Activated T-helper 1 cell treated with anti-CD3 and anti-CD28 coated beads, Interleukin-12 subunit alpha, Interleukin-12 subunit beta, Interleukin-2, Interleukin-4 antibody, amounts not matched to agents 30 ng/mL and 10 ng/mL and 1 ng/mL, durations not matched to agents 14 hours and 24 hours and 36 hours (primary cell): ENCODE measurements at regions of chr6 and their contacts with region 1.

Region 1: GRCh38 chr6:139375232-139376016 is 976 bp upstream of the CITED2 start:
- DNase-seq: peak; percentile 81
- H3K4me3 Mint-ChIP-seq: peak overlapping the region; percentile 87
- H3K27ac Mint-ChIP-seq: peak overlapping the region; percentile 98
- H3K4me1 Mint-ChIP-seq: peaks cover 31% of the 10 kb centered on the region
- H3K27me3 Mint-ChIP-seq: no peaks in the 10 kb centered on the region

Region 2: GRCh38 chr6:139028658-139029469 is 346.6 kb before region 1 on chr6 and contains the start of gene ABRACL:
- intact Hi-C with region 1: loop called (anchors 2 kb)
- DNase-seq: peak; percentile 73
- H3K4me3 Mint-ChIP-seq: peak within 1 kb of the TSS; percentile 93
- H3K27ac Mint-ChIP-seq: peak within 1 kb of the TSS; percentile 82
- H3K4me1 Mint-ChIP-seq: peaks cover 29% of the 10 kb centered on the region
- H3K27me3 Mint-ChIP-seq: no peaks in the 10 kb centered on the region
- total RNA-seq, gene ABRACL: 129 and 135 TPM in 2 replicates

Region 3: GRCh38 chr6:139308286-139308916 is 67.0 kb before region 1 on chr6:
- intact Hi-C with region 1: no loop called
- DNase-seq: no peak
- H3K4me3 Mint-ChIP-seq: no peak overlapping the region
- H3K27ac Mint-ChIP-seq: peak overlapping the region; percentile 78
- H3K4me1 Mint-ChIP-seq: peaks cover 32% of the 10 kb centered on the region
- H3K27me3 Mint-ChIP-seq: peaks cover 6% of the 10 kb centered on the region

Region 4: DNA sequence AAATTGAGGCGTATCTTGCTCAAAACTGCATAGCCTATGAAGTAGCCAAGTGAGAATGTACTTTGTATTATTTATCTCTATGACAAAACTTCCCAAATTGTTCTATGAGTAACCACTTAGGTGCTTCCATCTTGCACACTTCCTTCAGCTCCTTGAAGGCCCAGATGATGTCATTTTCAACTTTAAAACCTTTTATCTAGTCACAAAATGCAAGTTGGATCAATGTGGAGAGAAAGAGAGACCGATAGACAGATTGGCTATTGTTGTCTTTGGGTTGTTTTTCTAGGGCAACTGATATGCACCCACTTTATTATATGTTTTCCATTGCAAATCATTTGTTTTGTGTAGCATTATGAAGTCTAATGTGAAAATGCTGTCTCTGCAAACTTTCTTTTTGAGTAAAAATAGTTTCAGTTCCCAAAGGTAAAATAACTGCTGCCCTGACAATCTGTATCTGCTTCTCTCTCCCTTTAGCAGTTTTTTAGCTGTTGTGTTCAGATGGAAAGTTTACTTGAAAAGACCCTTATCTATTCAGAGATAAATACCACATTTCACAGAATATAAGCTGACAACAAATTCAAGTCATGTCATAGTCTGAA is 72.7 kb after region 1 on chr6:
- intact Hi-C with region 1: loop called (anchors 5 kb)
- DNase-seq: no peak
- H3K4me3 Mint-ChIP-seq: no peak overlapping the region
- H3K27ac Mint-ChIP-seq: no peak overlapping the region
- H3K4me1 Mint-ChIP-seq: peaks cover 14% of the 10 kb centered on the region
- H3K27me3 Mint-ChIP-seq: no peaks in the 10 kb centered on the region

Region 5: DNA sequence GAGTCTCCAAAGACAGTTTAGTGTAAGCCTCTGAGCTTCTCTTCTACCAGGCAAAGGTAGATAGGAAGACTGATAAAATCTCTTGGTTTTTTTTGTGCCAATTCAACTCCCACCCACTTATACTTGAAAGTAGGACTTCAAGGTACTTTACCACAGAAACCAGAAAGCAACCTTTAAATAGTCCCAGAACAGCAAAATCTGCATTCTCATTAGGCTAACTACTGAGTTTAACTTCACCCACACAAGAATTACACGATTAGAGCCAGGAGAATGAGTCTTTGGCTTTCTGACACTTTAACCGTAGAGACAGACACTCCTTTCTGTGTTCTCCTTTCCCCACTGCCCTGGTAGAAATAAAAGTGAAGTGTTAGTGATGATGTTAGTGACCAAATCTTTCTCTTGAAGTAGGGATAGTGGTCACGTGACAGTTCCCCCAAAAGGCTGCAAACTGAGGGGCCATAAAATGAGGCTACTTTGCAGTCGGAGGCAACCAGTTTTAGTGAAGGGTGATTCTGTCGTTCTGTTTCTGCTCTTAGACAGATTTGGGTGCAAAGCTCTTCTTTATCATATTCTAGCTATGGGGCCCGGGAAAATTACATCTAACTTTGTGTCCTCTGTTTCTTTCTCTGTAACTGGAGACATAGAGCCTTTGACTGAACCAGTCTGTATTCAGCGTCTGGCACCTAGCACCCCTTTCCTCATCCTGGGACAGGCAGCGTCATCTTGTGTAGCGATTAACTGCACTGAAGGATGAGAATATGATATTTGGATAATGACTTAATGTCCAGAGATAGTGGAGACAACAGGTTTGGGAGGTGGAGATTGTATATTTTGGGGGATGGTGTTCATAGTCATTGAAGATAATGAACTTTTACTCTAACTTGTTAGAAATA is 205.4 kb after region 1 on chr6:
- intact Hi-C with region 1: loop called (anchors 1 kb)
- DNase-seq: no peak
- H3K4me3 Mint-ChIP-seq: no peak overlapping the region
- H3K27ac Mint-ChIP-seq: peak overlapping the region; percentile 36
- H3K4me1 Mint-ChIP-seq: peaks cover 29% of the 10 kb centered on the region
- H3K27me3 Mint-ChIP-seq: peaks cover 8% of the 10 kb centered on the region

Region 6: GRCh38 chr6:139895205-139895793 is 519.9 kb after region 1 on chr6:
- intact Hi-C with region 1: loop called (anchors 5 kb)
- DNase-seq: no peak
- H3K4me3 Mint-ChIP-seq: no peak overlapping the region
- H3K27ac Mint-ChIP-seq: no peak overlapping the region
- H3K4me1 Mint-ChIP-seq: no peaks in the 10 kb centered on the region
- H3K27me3 Mint-ChIP-seq: peaks cover 7% of the 10 kb centered on the region

Region 7: DNA sequence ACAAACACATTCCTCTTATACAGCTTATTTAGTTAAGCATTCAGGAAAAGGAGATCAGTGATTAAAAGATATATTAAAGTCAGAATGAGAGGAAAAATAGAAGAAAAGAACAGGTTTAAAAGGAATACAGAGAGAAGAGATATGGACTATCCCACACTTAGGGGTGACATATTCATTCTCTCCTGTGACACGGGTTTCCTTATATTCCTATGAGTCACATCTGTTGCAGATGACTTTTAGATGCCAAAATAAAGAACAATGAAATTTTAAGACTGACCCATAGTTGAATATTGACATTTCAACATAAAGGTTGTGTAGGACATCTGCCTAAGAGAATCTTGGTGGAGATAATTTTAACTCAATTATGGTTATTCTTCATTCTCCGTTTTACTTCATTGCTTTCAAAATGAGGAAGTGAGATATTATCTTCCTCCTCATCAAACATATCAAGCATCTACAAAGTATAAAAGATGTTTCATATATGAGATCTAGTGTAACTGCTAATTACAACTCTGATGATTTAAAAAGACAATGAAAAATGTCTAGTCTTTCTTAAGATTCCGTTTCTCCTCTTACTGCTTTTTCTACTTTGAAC is 1335.7 kb after region 1 on chr6:
- intact Hi-C with region 1: loop called (anchors 5 kb)
- DNase-seq: no peak
- H3K4me3 Mint-ChIP-seq: no peak overlapping the region
- H3K27ac Mint-ChIP-seq: no peak overlapping the region
- H3K4me1 Mint-ChIP-seq: no peaks in the 10 kb centered on the region
- H3K27me3 Mint-ChIP-seq: no peaks in the 10 kb centered on the region